ENCODE measurements at regions of chr20 and their contacts with region 1.

Region 1: DNA sequence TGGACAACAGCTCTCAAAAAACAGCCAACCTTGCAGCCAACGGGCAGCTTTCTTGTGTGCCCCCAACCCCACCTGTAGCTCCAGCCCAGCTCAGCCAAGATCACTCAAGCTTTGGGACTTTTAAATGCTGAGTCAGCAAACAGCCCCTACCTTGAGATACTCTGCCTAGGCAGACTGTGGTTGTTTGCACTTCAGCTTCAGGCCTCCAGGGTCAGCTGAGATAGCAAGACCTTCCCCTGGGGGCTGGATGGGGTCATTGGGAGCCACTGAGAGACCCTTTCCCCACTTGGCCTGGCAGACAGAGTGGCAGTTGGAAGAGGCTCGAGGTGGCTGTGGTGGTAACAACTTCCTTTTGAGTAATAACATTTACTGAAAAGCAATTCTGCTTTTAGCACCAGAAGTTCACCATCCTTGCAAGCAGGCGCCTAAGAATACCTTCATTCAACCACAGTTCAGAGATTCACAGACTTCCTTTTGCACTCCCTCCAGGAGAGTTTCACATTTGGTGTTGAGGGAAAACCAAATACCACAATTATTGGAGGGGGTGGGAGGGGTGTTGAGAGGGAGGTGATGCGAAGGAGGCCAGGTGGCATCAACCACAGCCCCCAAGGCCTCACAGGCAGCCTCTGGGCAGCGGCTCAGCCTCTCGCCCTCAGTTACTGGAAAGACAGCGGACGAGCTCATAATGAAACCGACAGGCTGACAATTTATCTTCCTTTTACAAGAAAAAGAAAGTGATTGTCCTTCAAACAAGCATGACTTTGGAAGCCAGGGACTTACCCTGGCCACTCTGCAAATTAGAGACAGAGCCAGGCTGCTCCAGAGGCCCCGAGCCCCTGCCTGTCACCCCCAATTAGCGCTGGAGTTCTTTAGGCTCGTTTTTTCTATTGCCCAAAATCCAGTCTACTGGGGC is 148.1 kb downstream of the CEBPB start:
- DNase-seq: peak; percentile 92
- ATAC-seq: peak; percentile 86
- H3K4me3 ChIP-seq: peak overlapping the region; percentile 19; the same call in 1 of the 2 replicates
- H3K27ac ChIP-seq: peak overlapping the region; percentile 93
- H3K4me1 ChIP-seq: peaks cover 61% of the 10 kb centered on the region
- H3K27me3 ChIP-seq: no peaks in the 10 kb centered on the region
- CTCF ChIP-seq: peak in 2 of 3 experiments; percentile 32 to 37; a peak in 3 of 6 replicates
- EP300 ChIP-seq: peak; percentile 46 to 51; a peak in 2 of 4 replicates
- POLR2A ChIP-seq: no peak
- RAD21 ChIP-seq: no peak

Region 2: DNA sequence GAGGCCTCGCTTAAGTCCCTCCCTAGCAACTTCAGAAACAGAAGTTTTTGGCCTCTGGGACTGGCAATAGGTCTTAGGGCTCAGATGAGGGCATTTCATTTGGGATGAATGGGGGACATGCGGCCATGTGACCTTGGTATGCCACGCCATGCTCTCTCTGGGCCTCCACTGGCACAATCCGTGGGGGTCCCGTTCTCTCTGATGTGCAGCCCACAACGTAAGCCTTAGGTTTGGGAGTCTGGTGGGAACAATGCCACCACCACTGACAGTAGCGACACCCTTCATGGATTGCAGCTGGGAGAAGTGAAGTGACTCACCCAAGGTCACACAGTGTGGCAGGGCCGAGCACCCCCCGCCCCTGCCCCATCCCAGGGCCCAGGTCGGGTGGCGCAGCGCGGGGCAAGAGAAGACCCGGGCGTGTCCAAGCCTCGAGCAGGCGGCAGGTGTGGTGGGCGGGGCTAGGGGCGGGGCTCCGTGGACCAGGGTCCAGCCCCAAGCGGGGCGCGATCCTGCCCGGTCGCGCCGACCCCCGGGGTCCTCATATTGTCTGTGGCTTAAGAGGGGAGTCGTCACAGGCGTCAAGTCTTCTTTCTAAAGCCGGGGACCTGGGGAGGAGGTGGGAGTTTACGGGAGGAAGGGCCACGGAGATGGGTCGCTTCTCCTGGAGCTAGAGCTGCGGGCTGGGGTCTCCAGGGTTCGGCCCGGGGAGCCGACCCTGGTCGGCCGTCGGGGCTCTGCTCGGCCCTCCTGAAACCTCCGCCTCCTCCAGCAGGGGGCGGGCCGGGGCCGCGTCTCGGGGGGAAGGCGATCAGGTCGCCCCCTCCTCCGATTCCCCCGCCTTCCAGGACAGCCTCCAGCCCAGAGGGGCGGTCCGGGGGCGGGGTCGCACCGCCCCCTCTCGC is 148.8 kb before region 1 on chr20:
- CTCF ChIA-PET with region 1: interaction called, 3 read pairs
- POLR2A ChIA-PET with region 1: no interaction called
- RAD21 ChIA-PET with region 1: no interaction called
- SMC1A ChIA-PET with region 1: no interaction called
- in situ Hi-C with region 1: no loop called
- intact Hi-C with region 1: loop called (anchors 2 kb)
- DNase-seq: no peak
- ATAC-seq: peak; percentile 67
- H3K4me3 ChIP-seq: peak overlapping the region; percentile 88
- H3K27ac ChIP-seq: no peak overlapping the region
- H3K4me1 ChIP-seq: peaks cover 7% of the 10 kb centered on the region
- H3K27me3 ChIP-seq: no peaks in the 10 kb centered on the region
- CTCF ChIP-seq: peak; percentile 41 to 76 (median 70)
- EP300 ChIP-seq: no peak
- POLR2A ChIP-seq: no peak
- RAD21 ChIP-seq: peak; percentile 81

Region 3: DNA sequence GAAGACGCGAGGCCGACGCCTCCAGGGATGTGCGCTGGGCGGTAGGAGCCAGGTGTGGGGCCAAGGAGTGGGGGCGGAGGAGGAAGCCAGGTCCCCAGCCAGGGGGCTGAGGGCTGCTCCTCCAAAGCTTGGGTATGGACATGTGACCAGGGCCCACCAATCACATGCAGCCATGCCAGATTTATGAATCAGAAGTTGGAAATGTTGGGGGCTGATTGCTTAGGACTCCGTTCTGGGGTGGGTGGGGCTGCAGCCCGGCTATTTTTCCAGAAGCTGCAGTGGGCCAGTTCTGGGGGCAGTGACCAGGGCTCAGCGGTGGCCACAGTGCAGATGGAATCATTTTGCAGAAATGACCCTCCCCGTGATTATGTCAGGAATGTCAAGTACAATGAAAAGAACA is 52.1 kb before region 1 on chr20:
- CTCF ChIA-PET with region 1: no interaction called
- POLR2A ChIA-PET with region 1: no interaction called
- RAD21 ChIA-PET with region 1: interaction called, 6 read pairs
- SMC1A ChIA-PET with region 1: no interaction called
- in situ Hi-C with region 1: no loop called
- intact Hi-C with region 1: loop called (anchors 2 kb)
- DNase-seq: no peak
- ATAC-seq: peak; percentile 63
- H3K4me3 ChIP-seq: peak overlapping the region; percentile 39
- H3K27ac ChIP-seq: peak overlapping the region; percentile 59
- H3K4me1 ChIP-seq: peaks cover 24% of the 10 kb centered on the region
- H3K27me3 ChIP-seq: no peaks in the 10 kb centered on the region
- CTCF ChIP-seq: no peak
- EP300 ChIP-seq: no peak
- POLR2A ChIP-seq: no peak
- RAD21 ChIP-seq: no peak

Region 4: GRCh38 chr20:50450881-50451752 is 112.4 kb after region 1 on chr20:
- CTCF ChIA-PET with region 1: no interaction called
- POLR2A ChIA-PET with region 1: no interaction called
- RAD21 ChIA-PET with region 1: no interaction called
- SMC1A ChIA-PET with region 1: no interaction called
- in situ Hi-C with region 1: no loop called
- intact Hi-C with region 1: loop called (anchors 2 kb)
- DNase-seq: peak; percentile 68
- ATAC-seq: peak; percentile 87
- H3K4me3 ChIP-seq: peak overlapping the region; percentile 57
- H3K27ac ChIP-seq: peak overlapping the region; percentile 11; the same call in 1 of the 2 replicates
- H3K4me1 ChIP-seq: peaks cover 21% of the 10 kb centered on the region
- H3K27me3 ChIP-seq: no peaks in the 10 kb centered on the region; a peak in 1 of 4 replicates
- CTCF ChIP-seq: no peak
- EP300 ChIP-seq: peak; percentile 90 to 91; a peak in 3 of 4 replicates
- POLR2A ChIP-seq: no peak
- RAD21 ChIP-seq: no peak